ENCODE measurements at regions of chr19 and their contacts with region 1.

Region 1: GRCh38 chr19:38647368-38647965 is at the start of gene ACTN4:
- DNase-seq: peak; percentile 96 to 100 (median 98)

Region 2: DNA sequence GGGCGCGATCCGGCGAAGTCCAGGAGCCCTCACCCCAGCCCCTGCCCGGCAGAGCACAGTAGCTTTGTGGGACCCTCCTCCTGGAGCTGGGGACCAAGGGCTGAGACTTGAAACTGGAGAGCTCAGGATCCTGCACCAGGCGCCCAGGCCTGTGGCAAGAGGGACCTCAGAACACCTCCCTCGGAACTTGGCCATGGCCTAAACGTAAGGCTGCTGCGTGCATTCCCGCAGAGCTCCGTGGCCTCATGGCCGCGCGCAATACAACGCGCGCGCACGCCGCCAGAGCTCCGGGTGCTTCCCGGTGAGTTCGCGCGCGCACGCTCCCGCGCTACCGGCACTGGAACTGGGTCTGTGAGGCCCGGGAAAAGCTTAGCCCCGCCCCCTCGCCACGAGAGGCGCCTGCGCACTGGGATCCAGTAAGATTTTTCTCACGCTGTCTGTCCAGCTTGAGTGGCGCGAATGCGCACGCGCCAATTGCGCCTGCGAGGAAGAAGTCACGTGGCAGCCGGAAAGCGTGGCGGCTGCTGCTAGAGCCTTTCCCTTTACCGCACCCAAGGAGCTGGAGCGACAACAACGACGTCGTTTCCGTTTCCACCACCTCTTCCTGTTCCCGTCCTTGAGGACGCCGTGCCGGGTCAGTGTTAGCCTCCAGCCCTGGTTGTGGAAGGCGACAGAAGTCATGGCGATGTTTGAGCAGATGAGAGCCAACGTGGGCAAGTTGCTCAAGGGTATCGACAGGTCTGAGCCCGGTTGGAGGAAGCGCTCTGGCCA is 28.7 kb before region 1 on chr19 and contains the start of gene EIF3K:
- intact Hi-C with region 1: loop called (anchors 2 kb)
- DNase-seq: peak; percentile 96 to 100 (median 98)

Region 3: DNA sequence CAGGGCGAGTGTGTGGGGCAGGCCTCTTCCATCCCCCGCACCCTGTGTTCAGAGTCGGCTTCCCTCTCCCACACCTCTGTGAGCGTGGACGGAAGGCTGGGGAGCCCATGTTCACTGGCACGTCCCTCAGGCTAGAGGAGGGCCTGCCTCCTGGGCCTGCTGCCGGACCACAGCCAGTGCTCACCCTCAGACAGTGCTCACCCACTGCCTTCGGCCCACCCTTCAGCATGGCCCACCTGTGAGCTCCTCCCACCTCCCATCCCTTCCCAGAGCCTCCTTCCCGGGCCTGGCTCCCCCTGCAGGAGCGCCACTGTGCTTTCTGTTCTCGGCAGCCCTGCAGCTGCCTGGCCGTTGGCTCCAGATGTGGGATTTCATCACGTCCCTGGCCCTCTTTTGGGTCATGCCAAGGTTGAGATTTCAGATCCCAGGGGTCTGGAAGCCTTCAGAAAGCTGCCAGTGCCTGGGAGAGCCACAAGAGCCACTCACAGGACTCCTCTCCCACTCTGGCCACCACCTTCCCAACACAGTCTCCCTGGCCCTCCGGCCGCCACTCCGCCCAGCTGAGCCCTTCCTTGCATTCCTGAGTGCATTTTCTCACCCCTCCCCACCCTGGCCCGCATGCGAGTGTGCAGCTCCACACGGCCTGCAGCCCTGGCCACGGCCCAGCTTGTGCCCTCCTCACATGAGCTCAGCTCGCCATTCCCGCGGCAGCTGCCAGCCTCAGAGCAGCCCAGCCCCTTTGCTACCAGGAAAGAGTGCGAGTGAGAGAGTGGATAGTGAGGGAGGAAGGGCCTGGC is 71.5 kb after region 1 on chr19:
- intact Hi-C with region 1: loop called (anchors 5 kb)
- DNase-seq: peak in 9 of 10 donors; percentile 47 to 96 (median 66)

Region 4: DNA sequence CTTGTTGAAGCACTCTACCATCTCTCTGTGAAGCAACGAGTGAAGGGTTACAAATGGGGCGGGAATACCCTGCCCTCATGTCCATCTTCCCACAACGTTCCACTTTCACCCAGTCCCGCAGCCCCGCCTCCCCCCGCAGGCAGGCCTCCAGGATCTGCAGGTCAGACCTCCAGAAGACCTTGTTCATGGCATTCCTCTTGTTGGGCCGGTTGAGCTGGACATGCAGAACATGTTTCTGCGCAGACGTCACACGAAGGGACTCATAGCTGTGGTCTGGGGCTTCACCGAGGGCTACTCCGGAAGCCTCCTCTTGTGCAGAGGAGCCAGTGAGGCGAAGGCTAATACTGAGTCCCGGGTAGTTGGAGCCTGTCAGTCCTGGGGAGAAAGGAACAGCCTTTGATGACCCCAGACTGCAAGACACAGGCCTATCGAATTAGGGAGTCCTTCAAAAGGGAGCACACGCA is 183.7 kb after region 1 on chr19:
- intact Hi-C with region 1: loop called (anchors 1 kb)
- DNase-seq: peak in 7 of 10 donors; percentile 11 to 87 (median 33)